ENCODE measurements at regions of chr11 and their contacts with region 1.

Region 1: DNA sequence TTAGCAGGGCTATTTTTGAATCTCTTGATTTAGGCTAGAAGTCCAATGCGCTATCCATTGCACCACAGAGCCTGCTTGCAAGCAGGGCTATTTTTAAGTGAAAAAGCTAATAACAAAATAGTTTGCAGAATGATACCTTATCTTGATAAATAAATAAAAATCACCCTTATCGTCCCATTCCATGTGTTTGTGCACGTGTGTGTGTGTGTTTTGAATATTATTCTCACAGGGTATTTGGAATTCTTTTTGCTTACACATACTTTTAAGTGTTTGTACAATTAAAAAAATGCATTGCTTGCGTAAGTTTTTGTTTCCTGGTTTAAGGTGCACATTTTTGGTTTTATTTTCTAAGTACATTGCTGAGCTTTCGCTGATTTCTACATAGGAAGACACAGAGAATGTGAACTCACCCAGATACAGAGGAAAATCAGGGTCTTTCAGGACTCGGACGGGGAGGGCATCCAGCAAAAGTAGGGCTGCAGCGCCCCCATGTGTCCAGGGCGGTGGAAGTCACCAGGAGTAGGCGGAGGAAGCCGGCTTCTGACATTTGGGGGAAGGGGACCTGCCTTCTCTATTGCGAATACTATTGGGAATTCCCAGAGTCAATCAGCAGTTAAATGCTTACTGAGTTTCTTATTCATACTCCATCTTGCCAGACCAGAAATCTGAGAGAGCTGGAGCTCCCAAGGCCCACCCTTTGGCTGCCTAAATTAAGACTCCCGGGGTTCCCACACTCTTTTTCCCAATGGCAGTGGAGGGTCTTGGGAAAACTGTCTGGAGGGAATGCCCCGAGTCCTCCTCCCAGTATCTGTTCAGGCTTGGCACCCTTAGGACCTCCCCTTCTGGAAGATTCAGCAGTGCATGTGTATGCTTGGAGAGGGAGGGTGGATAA is 27.2 kb downstream of the SLC1A2 start:
- DNase-seq: peak; percentile 91
- ATAC-seq: peak; percentile 77
- H3K4me3 Mint-ChIP-seq: no peak overlapping the region
- H3K27ac Mint-ChIP-seq: no peak overlapping the region
- H3K4me1 Mint-ChIP-seq: peaks cover 29% of the 10 kb centered on the region
- H3K27me3 Mint-ChIP-seq: no peaks in the 10 kb centered on the region

Region 2: DNA sequence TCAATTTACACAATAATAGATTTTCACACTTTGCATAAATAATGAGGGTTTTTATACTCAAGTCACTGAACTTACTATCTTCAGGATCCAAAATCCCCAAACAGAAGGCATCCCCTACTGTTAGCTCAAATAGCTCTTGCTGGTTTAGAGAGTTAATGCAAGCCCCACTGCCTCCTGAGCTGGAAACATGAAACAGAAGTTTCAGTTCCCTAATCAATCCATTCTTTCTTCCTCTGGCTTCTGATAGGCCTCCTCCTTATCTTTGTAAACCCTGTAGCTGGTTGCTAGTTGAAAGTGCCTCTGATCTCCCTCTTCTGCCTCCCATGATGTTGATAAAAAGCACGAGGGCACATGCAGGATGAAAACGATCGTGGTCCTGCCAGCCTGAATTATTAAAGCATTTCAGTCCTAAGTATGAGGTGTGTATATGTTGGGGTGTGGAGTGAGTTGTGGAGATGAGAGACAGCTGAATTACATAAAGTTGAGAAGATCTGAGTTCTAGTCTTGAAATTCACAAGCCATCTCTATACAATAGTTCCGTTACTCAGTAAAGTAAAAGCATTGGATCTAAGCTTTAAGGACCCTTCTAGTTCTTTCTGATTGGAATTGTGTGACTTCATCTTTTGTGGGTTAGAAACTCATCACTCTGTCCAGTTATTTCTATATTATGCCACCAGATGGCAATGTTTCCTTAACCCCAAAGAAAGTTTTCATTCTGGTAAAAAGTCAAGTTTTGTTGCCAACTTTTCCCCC is 806.3 kb before region 1 on chr11:
- CTCF ChIA-PET with region 1: interaction called, 19 read pairs
- POLR2A ChIA-PET with region 1: no interaction called
- intact Hi-C with region 1: loop called (anchors 1 to 10 kb)
- DNase-seq: no peak
- ATAC-seq: no peak
- H3K4me3 Mint-ChIP-seq: no peak overlapping the region
- H3K27ac Mint-ChIP-seq: no peak overlapping the region
- H3K4me1 Mint-ChIP-seq: peaks cover 4% of the 10 kb centered on the region
- H3K27me3 Mint-ChIP-seq: peaks cover 30% of the 10 kb centered on the region

Region 3: GRCh38 chr11:34926101-34926830 is 465.9 kb before region 1 on chr11:
- CTCF ChIA-PET with region 1: interaction called, 98 read pairs
- POLR2A ChIA-PET with region 1: interaction called, 3 read pairs
- intact Hi-C with region 1: loop called (anchors 1 kb)
- DNase-seq: peak; percentile 8
- ATAC-seq: peak; percentile 68
- H3K4me3 Mint-ChIP-seq: no peak overlapping the region
- H3K27ac Mint-ChIP-seq: no peak overlapping the region
- H3K4me1 Mint-ChIP-seq: peaks cover 20% of the 10 kb centered on the region
- H3K27me3 Mint-ChIP-seq: no peaks in the 10 kb centered on the region

Region 4: DNA sequence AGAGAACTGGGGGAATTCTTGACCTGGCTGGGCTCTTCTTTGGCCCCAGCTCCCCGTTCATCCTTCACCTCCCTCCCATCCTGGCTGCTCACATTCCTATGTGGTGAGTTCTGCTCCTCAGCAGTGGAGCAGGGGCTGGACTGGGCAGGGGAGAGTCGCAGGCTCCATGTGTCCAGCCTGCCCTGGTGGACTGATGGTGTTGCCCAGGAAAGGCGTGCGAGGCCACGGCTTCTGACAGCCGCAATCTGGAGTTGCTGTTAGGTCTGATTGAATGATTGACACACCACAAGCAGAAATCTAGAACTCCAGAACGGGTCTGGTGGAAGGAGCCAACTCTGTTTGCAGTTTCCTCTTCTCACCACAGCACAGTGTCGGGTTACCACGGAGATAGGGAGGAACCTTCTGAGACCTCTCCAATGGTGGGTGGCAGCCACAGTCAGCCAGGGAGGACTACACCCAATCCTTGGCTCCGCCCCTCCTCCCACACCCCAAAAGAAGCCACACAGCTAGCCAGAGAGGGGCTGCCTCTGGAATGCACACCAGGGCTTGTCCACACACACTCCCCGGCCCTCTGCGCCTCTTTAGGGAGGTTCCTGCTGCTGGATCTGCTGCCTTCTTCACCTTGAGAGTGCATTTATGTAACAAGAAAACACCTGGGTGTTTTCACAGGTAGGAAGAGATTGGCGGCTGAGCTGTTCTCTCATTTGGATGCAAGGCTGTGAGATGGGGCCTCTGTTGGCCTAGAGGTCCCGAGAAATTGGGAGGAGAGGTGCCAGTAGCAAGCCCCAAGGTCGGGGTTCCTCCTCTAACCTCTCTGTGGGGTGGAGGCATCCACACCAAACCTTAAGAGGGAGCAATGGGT is 309.6 kb before region 1 on chr11:
- CTCF ChIA-PET with region 1: no interaction called
- POLR2A ChIA-PET with region 1: no interaction called
- intact Hi-C with region 1: loop called in 1 of 2 experiments (anchors 5 kb)
- DNase-seq: peak; percentile 89
- ATAC-seq: peak; percentile 78
- H3K4me3 Mint-ChIP-seq: peak overlapping the region; percentile 30
- H3K27ac Mint-ChIP-seq: peak overlapping the region; percentile 85
- H3K4me1 Mint-ChIP-seq: peaks cover 93% of the 10 kb centered on the region
- H3K27me3 Mint-ChIP-seq: no peaks in the 10 kb centered on the region

Region 5: DNA sequence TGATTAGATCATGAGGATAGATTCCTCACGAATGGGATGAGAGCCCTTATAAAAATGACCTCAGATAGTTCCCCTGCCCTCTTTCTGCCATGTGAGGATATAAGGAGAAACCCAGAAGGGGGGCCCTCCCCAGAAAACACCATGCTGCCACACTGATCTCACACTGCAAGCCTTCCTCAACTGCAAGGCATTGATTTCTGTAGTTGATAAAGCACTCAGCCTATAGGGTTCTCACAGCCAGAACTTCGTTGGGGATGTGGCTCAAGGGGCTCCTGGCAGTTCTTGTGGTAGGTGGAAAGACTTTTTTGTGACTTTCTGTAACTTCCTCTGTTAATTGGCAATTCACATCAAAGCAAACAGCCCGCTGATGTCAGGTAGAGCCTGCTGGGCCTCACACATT is 144.3 kb before region 1 on chr11:
- CTCF ChIA-PET with region 1: no interaction called
- POLR2A ChIA-PET with region 1: no interaction called
- intact Hi-C with region 1: no loop called
- DNase-seq: no peak
- ATAC-seq: no peak
- H3K4me3 Mint-ChIP-seq: no peak overlapping the region
- H3K27ac Mint-ChIP-seq: no peak overlapping the region
- H3K4me1 Mint-ChIP-seq: peaks cover 31% of the 10 kb centered on the region
- H3K27me3 Mint-ChIP-seq: no peaks in the 10 kb centered on the region

Region 6: DNA sequence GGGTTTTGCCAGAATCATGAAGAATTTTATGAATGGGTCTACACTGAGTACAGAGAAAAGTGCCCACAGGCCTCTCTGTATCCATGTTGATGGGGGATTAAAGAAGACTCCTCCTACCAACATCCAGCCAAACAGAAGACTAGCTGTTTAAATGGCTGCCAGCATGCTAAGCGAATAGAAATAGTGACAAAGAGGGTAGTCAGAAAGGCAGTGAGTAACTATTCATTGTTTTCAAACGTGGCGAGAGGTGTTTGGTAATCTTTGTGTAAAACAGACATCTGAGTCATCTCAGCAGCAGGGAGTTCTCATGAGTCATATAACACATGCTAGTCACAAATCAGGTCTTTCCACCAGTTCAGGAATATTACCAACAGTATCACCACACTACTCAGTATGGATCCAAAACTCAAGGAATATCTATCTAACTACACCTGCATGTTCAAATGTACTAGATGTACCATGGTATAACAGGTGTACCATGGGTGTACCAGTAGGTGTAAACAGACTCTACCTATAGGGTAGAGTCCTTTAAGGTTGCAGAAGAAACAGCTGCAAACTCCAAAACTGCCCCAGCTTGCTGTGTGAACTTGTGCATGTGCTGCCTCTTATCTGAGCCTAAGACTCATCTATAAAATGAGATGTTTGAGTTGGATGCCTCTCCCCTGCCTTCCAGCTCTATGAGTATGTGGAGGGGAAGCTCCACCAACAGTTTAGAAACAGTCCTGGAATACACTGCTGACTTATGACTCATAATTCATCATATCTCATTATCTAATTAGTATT is 54.8 kb before region 1 on chr11:
- CTCF ChIA-PET with region 1: interaction called, 9 read pairs
- POLR2A ChIA-PET with region 1: no interaction called
- intact Hi-C with region 1: loop called (anchors 2 kb)
- DNase-seq: peak; percentile 46
- ATAC-seq: peak; percentile 96
- H3K4me3 Mint-ChIP-seq: no peak overlapping the region
- H3K27ac Mint-ChIP-seq: peak overlapping the region; percentile 19
- H3K4me1 Mint-ChIP-seq: peaks cover 36% of the 10 kb centered on the region
- H3K27me3 Mint-ChIP-seq: no peaks in the 10 kb centered on the region

Region 7: DNA sequence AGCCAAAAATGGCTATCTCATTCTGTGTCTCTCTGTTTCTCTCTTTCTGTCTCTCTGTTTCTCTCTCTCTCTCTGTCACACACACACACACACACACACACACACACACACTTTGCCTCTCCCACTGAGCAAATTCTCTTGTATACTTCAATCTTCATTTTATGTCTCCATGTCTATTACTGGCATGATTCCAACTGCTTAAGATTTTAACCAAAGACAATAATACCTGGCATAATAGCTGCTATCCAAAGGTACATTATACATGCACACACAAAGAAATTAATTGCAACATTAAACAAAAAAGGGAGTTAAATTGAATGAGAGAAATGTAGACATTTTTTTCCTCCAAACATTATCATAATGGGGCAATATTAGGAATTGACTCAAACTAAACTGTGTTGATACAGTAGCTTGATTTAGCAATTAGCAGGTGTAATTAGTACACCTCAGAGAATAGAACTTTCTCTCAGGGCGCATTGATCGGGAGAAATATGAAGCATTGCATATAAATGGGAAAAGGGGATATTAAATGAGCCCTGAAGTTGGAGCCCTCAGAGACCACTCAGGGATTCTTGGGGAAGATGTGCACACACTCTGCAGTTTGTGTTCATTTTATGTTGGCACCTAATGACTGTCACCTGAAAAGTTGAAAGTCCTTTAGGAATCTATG is 44.5 kb after region 1 on chr11:
- CTCF ChIA-PET with region 1: no interaction called
- POLR2A ChIA-PET with region 1: no interaction called
- intact Hi-C with region 1: no loop called
- DNase-seq: no peak
- ATAC-seq: no peak
- H3K4me3 Mint-ChIP-seq: no peak overlapping the region
- H3K27ac Mint-ChIP-seq: no peak overlapping the region
- H3K4me1 Mint-ChIP-seq: no peaks in the 10 kb centered on the region
- H3K27me3 Mint-ChIP-seq: peaks cover 31% of the 10 kb centered on the region

Region 8: DNA sequence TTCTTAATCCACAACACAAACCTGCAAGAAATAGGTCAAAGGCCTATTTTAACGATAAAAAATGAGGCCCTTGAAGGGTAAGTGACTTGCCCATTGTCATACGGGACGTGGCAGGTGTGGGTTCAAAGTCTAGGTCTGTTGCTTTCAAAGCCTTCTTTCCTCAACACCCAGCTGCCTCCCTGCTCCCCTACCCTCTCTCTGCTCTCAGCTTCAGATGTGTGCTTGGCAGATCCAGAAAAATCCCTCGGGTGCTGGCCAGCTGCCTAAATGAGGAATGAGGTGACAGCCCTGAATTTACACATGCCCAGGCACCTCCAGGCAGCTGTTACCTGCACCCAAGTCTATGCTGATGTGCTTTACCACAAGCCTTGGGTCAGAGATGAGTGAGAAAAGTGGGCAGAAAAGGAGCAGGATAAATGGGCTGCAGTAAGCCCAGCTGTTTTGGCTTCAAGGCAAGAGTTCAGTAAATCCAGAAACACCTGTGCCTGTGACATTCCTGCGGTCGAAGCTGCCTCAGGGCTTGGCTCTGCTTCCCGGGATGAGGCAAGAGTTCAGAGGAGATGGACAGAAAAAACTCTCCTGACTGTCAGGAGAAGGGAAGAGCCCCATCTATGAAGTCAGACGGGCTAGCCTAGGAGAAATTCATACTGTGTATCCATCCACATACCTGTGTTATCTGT is 501.8 kb after region 1 on chr11:
- CTCF ChIA-PET with region 1: no interaction called
- POLR2A ChIA-PET with region 1: no interaction called
- intact Hi-C with region 1: no loop called
- DNase-seq: no peak
- ATAC-seq: no peak
- H3K4me3 Mint-ChIP-seq: no peak overlapping the region
- H3K27ac Mint-ChIP-seq: no peak overlapping the region
- H3K4me1 Mint-ChIP-seq: no peaks in the 10 kb centered on the region
- H3K27me3 Mint-ChIP-seq: peaks cover 14% of the 10 kb centered on the region